Activated CD4-positive, alpha-beta memory T cell treated with anti-CD3 and anti-CD28 coated beads, Interleukin-2, amount 10 ng/mL, durations not matched to agents 7 days and 5 days (primary cell): ENCODE measurements at regions of chr12 and their contacts with region 1.

Region 1: DNA sequence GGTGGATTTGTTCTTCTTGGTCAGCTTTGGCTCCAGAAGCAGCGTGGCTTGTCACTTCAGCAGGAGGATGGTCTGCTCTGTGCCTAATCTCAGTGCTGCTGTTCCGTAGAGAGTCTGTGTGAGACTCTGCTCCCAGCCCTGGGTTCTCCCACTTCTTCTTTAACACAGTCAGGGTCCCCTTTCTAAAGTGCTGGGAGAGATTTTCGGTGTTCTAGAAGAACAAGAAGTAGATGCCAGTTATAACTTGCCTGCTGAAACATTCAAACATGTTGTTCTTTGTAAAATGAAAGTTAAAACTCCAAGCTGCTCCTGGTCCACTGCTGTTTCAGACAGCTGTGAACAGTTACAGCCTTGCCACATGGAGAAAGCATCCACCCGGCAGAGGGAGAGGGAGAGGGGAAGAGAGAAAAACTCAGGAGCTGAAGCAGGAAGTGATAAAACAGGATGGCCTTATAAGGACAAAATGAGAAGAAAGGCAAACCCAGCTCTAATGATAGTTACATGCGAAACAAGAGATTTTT is 55.2 kb upstream of the CERS5 start:
- DNase-seq: peak; percentile 38
- H3K4me3 Mint-ChIP-seq: no peak overlapping the region
- H3K27ac Mint-ChIP-seq: no peak overlapping the region
- H3K4me1 Mint-ChIP-seq: peaks cover 40% of the 10 kb centered on the region
- H3K27me3 Mint-ChIP-seq: no peaks in the 10 kb centered on the region

Region 2: GRCh38 chr12:50167041-50167828 is 55.1 kb before region 1 on chr12 and contains the start of gene CERS5:
- CTCF ChIA-PET with region 1: interaction called, 4 read pairs
- POLR2A ChIA-PET with region 1: interaction called, 11 read pairs
- DNase-seq: peak; percentile 99
- H3K4me3 Mint-ChIP-seq: peak within 1 kb of the TSS; percentile 97
- H3K27ac Mint-ChIP-seq: peak within 1 kb of the TSS; percentile 89
- H3K4me1 Mint-ChIP-seq: peaks cover 31% of the 10 kb centered on the region
- H3K27me3 Mint-ChIP-seq: no peaks in the 10 kb centered on the region
- total RNA-seq, gene CERS5: 48.4 to 56.3 TPM

Region 3: GRCh38 chr12:50203691-50204090 is 18.6 kb before region 1 on chr12:
- CTCF ChIA-PET with region 1: interaction called, 3 read pairs
- POLR2A ChIA-PET with region 1: interaction called, 48 read pairs
- DNase-seq: no peak
- H3K4me3 Mint-ChIP-seq: no peak overlapping the region
- H3K27ac Mint-ChIP-seq: no peak overlapping the region
- H3K4me1 Mint-ChIP-seq: peaks cover 6% of the 10 kb centered on the region
- H3K27me3 Mint-ChIP-seq: no peaks in the 10 kb centered on the region

Region 4: GRCh38 chr12:50246873-50247612 is 24.7 kb after region 1 on chr12:
- CTCF ChIA-PET with region 1: interaction called, 8 read pairs
- POLR2A ChIA-PET with region 1: interaction called, 21 read pairs
- DNase-seq: peak; percentile 43
- H3K4me3 Mint-ChIP-seq: peak overlapping the region; percentile 79
- H3K27ac Mint-ChIP-seq: peak overlapping the region; percentile 94
- H3K4me1 Mint-ChIP-seq: peaks cover 76% of the 10 kb centered on the region
- H3K27me3 Mint-ChIP-seq: no peaks in the 10 kb centered on the region

Region 5: DNA sequence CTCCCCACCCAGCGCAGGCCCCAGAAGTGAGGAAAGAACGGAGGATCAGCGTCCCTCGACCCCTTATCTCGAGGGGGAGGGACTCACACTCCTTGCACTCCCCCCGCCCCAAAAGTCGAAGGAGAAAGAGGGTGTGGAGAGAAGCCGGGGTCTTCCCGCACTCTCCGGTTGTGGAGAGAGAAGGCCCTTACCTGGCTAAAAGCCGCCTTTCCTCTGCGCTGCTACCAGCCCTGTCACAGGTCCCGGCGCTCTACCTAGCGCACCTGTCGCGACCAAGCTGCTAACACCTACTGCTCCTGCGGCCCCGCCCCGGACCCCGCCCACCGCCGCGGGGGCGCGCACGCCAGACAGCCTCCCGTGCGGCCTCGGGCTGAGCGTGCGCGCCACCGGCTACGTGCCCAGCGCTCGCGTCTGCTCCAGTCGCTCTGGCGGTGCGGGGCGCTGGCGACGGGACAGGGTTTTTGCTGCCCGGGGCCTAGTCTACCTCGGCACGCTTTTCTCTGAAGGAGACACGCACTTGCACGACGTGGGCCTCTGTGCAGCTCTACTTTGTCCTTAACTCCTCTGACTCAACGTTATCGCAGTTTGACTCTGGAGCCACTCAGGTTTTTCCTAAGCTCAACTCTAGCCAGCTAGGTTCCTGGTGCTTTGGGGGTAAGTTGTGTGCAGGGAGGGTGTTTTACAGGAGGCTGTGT is 61.0 kb after region 1 on chr12 and contains the start of gene LIMA1:
- CTCF ChIA-PET with region 1: interaction called, 14 read pairs
- POLR2A ChIA-PET with region 1: interaction called, 30 read pairs
- DNase-seq: peak; percentile 93
- H3K4me3 Mint-ChIP-seq: peak within 1 kb of the TSS; percentile 89
- H3K27ac Mint-ChIP-seq: peak within 1 kb of the TSS; percentile 70
- H3K4me1 Mint-ChIP-seq: peaks cover 26% of the 10 kb centered on the region
- H3K27me3 Mint-ChIP-seq: peaks cover 13% of the 10 kb centered on the region
- total RNA-seq, gene LIMA1: 59.4 to 59.9 TPM